MCF 10A (cell line): ENCODE measurements at regions of chr16 and their contacts with region 1.

Region 1: GRCh38 chr16:85402910-85403692 is 210.0 kb upstream of the GSE1 start:
- DNase-seq: no peak
- H3K4me3 Mint-ChIP-seq: no peak overlapping the region
- H3K27ac Mint-ChIP-seq: no peak overlapping the region
- H3K4me1 Mint-ChIP-seq: no peaks in the 10 kb centered on the region
- H3K27me3 Mint-ChIP-seq: no peaks in the 10 kb centered on the region
- CTCF ChIP-seq: no peak

Region 2: GRCh38 chr16:85420501-85421337 is 17.6 kb after region 1 on chr16:
- CTCF ChIA-PET with region 1: interaction called, 11 read pairs
- POLR2A ChIA-PET with region 1: interaction called, 5 read pairs
- intact Hi-C with region 1: no loop called
- DNase-seq: peak; percentile 38
- H3K4me3 Mint-ChIP-seq: no peak overlapping the region
- H3K27ac Mint-ChIP-seq: no peak overlapping the region
- H3K4me1 Mint-ChIP-seq: no peaks in the 10 kb centered on the region
- H3K27me3 Mint-ChIP-seq: no peaks in the 10 kb centered on the region
- CTCF ChIP-seq: peak; percentile 99